MCF 10A (cell line): ENCODE measurements at regions of chr18 and their contacts with region 1.

Region 1: GRCh38 chr18:31424383-31424988 is 23.1 kb upstream of the DSG3 start:
- DNase-seq: peak; percentile 67
- H3K4me3 Mint-ChIP-seq: no peak overlapping the region
- H3K27ac Mint-ChIP-seq: no peak overlapping the region
- H3K4me1 Mint-ChIP-seq: peaks cover 24% of the 10 kb centered on the region
- H3K27me3 Mint-ChIP-seq: no peaks in the 10 kb centered on the region
- CTCF ChIP-seq: peak; percentile 83

Region 2: DNA sequence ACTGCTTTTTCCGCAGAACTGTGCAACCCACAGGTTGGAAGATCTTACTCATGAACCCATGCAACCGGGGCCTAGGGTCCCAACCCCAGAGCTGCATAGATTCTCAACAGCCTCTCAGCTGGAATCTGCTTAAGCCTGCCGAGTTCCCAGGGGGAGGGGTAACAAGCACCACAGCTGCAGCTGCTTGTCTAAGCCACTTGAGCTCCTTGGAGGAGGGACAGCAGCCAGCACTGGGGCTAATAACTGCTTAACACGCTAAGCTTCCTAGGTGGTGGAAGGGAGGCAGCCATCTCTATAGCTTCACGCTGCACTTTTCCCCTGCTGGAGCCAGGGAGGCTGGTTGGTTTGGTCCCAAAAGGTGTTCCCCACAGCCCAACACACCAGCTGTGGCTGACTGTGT is 693.6 kb before region 1 on chr18:
- CTCF ChIA-PET with region 1: no interaction called
- POLR2A ChIA-PET with region 1: no interaction called
- intact Hi-C with region 1: no loop called
- DNase-seq: no peak
- H3K4me3 Mint-ChIP-seq: no peak overlapping the region
- H3K27ac Mint-ChIP-seq: no peak overlapping the region
- H3K4me1 Mint-ChIP-seq: no peaks in the 10 kb centered on the region
- H3K27me3 Mint-ChIP-seq: no peaks in the 10 kb centered on the region
- CTCF ChIP-seq: no peak

Region 3: GRCh38 chr18:31267823-31268481 is 156.5 kb before region 1 on chr18:
- CTCF ChIA-PET with region 1: interaction called, 9 read pairs
- POLR2A ChIA-PET with region 1: interaction called, 12 read pairs
- intact Hi-C with region 1: loop called (anchors 2 kb)
- DNase-seq: no peak
- H3K4me3 Mint-ChIP-seq: peak overlapping the region; percentile 12
- H3K27ac Mint-ChIP-seq: peak overlapping the region; percentile 84
- H3K4me1 Mint-ChIP-seq: peaks cover 28% of the 10 kb centered on the region
- H3K27me3 Mint-ChIP-seq: no peaks in the 10 kb centered on the region
- CTCF ChIP-seq: no peak

Region 4: DNA sequence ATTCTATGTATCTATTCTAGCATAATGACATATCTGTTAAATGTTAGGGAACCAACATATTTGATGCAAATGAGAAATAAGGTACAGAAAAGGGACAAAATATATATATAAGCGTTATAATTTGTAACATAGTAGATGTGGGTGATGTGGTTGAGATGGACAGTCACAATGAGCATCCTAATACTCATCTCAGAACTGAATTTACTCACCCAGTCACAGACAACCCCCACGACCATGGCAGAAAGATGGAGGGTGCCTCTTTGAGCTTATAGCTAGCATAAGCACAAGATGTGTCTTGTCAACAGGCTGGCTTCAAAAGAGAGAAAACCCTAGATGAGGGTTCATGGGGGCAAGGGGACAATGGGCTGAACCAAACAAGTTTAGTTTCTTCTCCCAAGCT is 13.9 kb after region 1 on chr18:
- CTCF ChIA-PET with region 1: interaction called, 17 read pairs
- POLR2A ChIA-PET with region 1: interaction called, 20 read pairs
- intact Hi-C with region 1: no loop called
- DNase-seq: no peak
- H3K4me3 Mint-ChIP-seq: no peak overlapping the region
- H3K27ac Mint-ChIP-seq: no peak overlapping the region
- H3K4me1 Mint-ChIP-seq: no peaks in the 10 kb centered on the region
- H3K27me3 Mint-ChIP-seq: no peaks in the 10 kb centered on the region
- CTCF ChIP-seq: no peak

Region 5: DNA sequence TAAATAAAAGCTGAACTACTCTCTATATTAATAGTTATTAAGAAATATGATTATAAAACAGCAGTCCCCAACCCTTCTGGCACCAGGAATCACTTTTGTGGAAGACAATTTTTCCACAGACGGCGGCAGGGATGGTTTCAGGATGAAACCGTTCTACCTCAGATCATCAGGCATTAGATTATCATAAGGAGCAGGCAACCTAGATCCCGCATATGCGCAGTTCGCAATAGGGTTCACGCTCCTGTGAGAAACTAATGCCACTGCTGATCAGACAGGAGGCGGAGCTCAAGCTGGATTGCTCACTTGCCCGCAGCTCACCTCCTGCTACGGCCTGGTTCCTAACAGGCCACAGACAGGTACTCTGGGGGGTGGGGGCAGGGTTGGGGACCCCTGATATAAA is 54.2 kb after region 1 on chr18:
- CTCF ChIA-PET with region 1: interaction called, 10 read pairs
- POLR2A ChIA-PET with region 1: interaction called, 3 read pairs
- intact Hi-C with region 1: no loop called
- DNase-seq: no peak
- H3K4me3 Mint-ChIP-seq: no peak overlapping the region
- H3K27ac Mint-ChIP-seq: no peak overlapping the region
- H3K4me1 Mint-ChIP-seq: no peaks in the 10 kb centered on the region
- H3K27me3 Mint-ChIP-seq: no peaks in the 10 kb centered on the region
- CTCF ChIP-seq: no peak

Region 6: GRCh38 chr18:31512203-31512764 is 87.8 kb after region 1 on chr18:
- CTCF ChIA-PET with region 1: interaction called, 18 read pairs
- POLR2A ChIA-PET with region 1: interaction called, 21 read pairs
- intact Hi-C with region 1: no loop called
- DNase-seq: peak; percentile 87
- H3K4me3 Mint-ChIP-seq: peak overlapping the region; percentile 59
- H3K27ac Mint-ChIP-seq: peak overlapping the region; percentile 95
- H3K4me1 Mint-ChIP-seq: peaks cover 51% of the 10 kb centered on the region
- H3K27me3 Mint-ChIP-seq: no peaks in the 10 kb centered on the region
- CTCF ChIP-seq: no peak

Region 7: GRCh38 chr18:32877371-32877770 is 1452.9 kb after region 1 on chr18:
- CTCF ChIA-PET with region 1: no interaction called
- POLR2A ChIA-PET with region 1: no interaction called
- intact Hi-C with region 1: no loop called
- DNase-seq: no peak
- H3K4me3 Mint-ChIP-seq: no peak overlapping the region
- H3K27ac Mint-ChIP-seq: no peak overlapping the region
- H3K4me1 Mint-ChIP-seq: no peaks in the 10 kb centered on the region
- H3K27me3 Mint-ChIP-seq: peaks cover 97% of the 10 kb centered on the region
- CTCF ChIP-seq: no peak